Endothelial cell of umbilical vein (primary cell): ENCODE measurements at regions of chr6 and their contacts with region 1.

Region 1: GRCh38 chr6:127342946-127343808 is at the start of gene ECHDC1:
- DNase-seq: peak; percentile 79
- H3K4me3 ChIP-seq: peak within 1 kb of the TSS; percentile 48 to 94 (median 86)
- H3K27ac ChIP-seq: peak within 1 kb of the TSS; percentile 88
- H3K4me1 ChIP-seq: peaks cover 20% of the 10 kb centered on the region
- H3K27me3 ChIP-seq: no peaks in the 10 kb centered on the region
- CTCF ChIP-seq: no peak
- POLR2A ChIP-seq: peak; percentile 74
- total RNA-seq, gene ECHDC1: 36.7 and 36.8 TPM in 2 replicates

Region 2: GRCh38 chr6:127420556-127420955 is 77.4 kb after region 1 on chr6:
- CTCF ChIA-PET with region 1: no interaction called
- POLR2A ChIA-PET with region 1: no interaction called
- dilution Hi-C with region 1: no loop called
- intact Hi-C with region 1: loop called (anchors 1 kb)
- DNase-seq: peak; percentile 96
- H3K4me3 ChIP-seq: no peak overlapping the region
- H3K27ac ChIP-seq: peak overlapping the region; percentile 83
- H3K4me1 ChIP-seq: peaks cover 13% of the 10 kb centered on the region
- H3K27me3 ChIP-seq: no peaks in the 10 kb centered on the region
- CTCF ChIP-seq: peak in 1 of 2 donors; percentile 19
- POLR2A ChIP-seq: no peak